ENCODE measurements at regions of chr17 and their contacts with region 1.

Region 1: DNA sequence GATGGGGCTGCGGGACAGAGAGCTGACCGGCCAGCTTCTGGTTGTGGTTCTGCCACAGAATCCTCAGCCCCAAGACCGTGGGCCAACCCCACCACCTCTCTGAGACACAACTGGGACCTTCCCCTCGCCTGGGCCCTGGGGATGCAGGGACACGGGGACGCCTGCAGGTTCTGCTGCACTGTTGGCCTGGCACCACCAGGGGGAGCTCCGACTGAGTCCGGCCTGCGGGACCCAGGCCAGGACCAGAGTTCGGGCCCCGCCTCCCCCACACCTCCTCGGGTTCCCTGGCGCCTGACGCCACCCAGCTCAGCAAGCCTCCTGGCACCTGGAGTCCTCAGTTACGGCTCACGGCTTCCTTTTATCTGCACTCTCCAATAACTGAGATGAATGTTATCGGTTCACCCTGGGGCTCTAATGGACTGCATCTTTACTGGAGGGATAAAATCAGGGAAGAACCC is 27.3 kb downstream of the TBC1D16 start:
- DNase-seq: peak; percentile 81 to 91
- H3K4me3 ChIP-seq: no peak overlapping the region
- H3K4me3 Mint-ChIP-seq: no peak overlapping the region
- H3K27ac Mint-ChIP-seq: no peak overlapping the region
- H3K4me1 ChIP-seq: peaks cover 10% of the 10 kb centered on the region; the same call in 1 of the 2 replicates
- H3K4me1 Mint-ChIP-seq: peaks cover 8% of the 10 kb centered on the region
- H3K27me3 ChIP-seq: no peaks in the 10 kb centered on the region
- H3K27me3 Mint-ChIP-seq: no peaks in the 10 kb centered on the region
- CTCF ChIP-seq: peak; percentile 96 to 97

Region 2: GRCh38 chr17:79902146-79902791 is 106.1 kb before region 1 on chr17:
- CTCF ChIA-PET with region 1: no interaction called
- POLR2A ChIA-PET with region 1: no interaction called
- intact Hi-C with region 1: no loop called
- DNase-seq: peak in 1 of 2 experiments; percentile 44
- H3K4me3 ChIP-seq: no peak overlapping the region
- H3K4me3 Mint-ChIP-seq: no peak overlapping the region
- H3K27ac Mint-ChIP-seq: no peak overlapping the region
- H3K4me1 ChIP-seq: peaks cover 13% of the 10 kb centered on the region; the same call in 1 of the 2 replicates
- H3K4me1 Mint-ChIP-seq: peaks cover 19% of the 10 kb centered on the region
- H3K27me3 ChIP-seq: no peaks in the 10 kb centered on the region
- H3K27me3 Mint-ChIP-seq: no peaks in the 10 kb centered on the region
- CTCF ChIP-seq: no peak

Region 3: GRCh38 chr17:80035943-80036714 is 27.7 kb after region 1 on chr17 and contains the start of gene CCDC40:
- CTCF ChIA-PET with region 1: interaction called, 7 read pairs
- POLR2A ChIA-PET with region 1: no interaction called
- intact Hi-C with region 1: loop called (anchors 1 kb)
- DNase-seq: peak; percentile 84 to 91
- H3K4me3 ChIP-seq: peak within 1 kb of the TSS; percentile 63
- H3K4me3 Mint-ChIP-seq: peak within 1 kb of the TSS; percentile 88
- H3K27ac Mint-ChIP-seq: peak within 1 kb of the TSS; percentile 99
- H3K4me1 ChIP-seq: peaks cover 4% of the 10 kb centered on the region; the same call in 1 of the 2 replicates
- H3K4me1 Mint-ChIP-seq: peaks cover 9% of the 10 kb centered on the region
- H3K27me3 ChIP-seq: no peaks in the 10 kb centered on the region
- H3K27me3 Mint-ChIP-seq: no peaks in the 10 kb centered on the region
- CTCF ChIP-seq: peak in 1 of 2 experiments; percentile 14
- total RNA-seq, gene CCDC40: 3.7 and 3.9 TPM in 2 replicates

Region 4: GRCh38 chr17:80082403-80083135 is 74.2 kb after region 1 on chr17:
- CTCF ChIA-PET with region 1: interaction called, 5 read pairs
- POLR2A ChIA-PET with region 1: no interaction called
- intact Hi-C with region 1: loop called (anchors 5 kb)
- DNase-seq: peak; percentile 74 to 82
- H3K4me3 ChIP-seq: no peak overlapping the region
- H3K4me3 Mint-ChIP-seq: no peak overlapping the region
- H3K27ac Mint-ChIP-seq: no peak overlapping the region
- H3K4me1 ChIP-seq: no peaks in the 10 kb centered on the region
- H3K4me1 Mint-ChIP-seq: peaks cover 9% of the 10 kb centered on the region
- H3K27me3 ChIP-seq: no peaks in the 10 kb centered on the region
- H3K27me3 Mint-ChIP-seq: peaks cover 3% of the 10 kb centered on the region
- CTCF ChIP-seq: peak; percentile 80 to 89

Region 5: GRCh38 chr17:80101011-80101945 is 92.9 kb after region 1 on chr17 and contains the start of gene GAA:
- CTCF ChIA-PET with region 1: interaction called, 11 read pairs
- POLR2A ChIA-PET with region 1: no interaction called
- intact Hi-C with region 1: no loop called
- DNase-seq: peak; percentile 80 to 95
- H3K4me3 ChIP-seq: peak within 1 kb of the TSS; percentile 97
- H3K4me3 Mint-ChIP-seq: peak within 1 kb of the TSS; percentile 86
- H3K27ac Mint-ChIP-seq: peak within 1 kb of the TSS; percentile 81
- H3K4me1 ChIP-seq: peaks cover 9% of the 10 kb centered on the region
- H3K4me1 Mint-ChIP-seq: peaks cover 6% of the 10 kb centered on the region
- H3K27me3 ChIP-seq: no peaks in the 10 kb centered on the region; the same call in 1 of the 2 replicates
- H3K27me3 Mint-ChIP-seq: no peaks in the 10 kb centered on the region
- CTCF ChIP-seq: peak; percentile 64 to 94
- total RNA-seq, gene GAA: 42.4 and 44.6 TPM in 2 replicates

Region 6: DNA sequence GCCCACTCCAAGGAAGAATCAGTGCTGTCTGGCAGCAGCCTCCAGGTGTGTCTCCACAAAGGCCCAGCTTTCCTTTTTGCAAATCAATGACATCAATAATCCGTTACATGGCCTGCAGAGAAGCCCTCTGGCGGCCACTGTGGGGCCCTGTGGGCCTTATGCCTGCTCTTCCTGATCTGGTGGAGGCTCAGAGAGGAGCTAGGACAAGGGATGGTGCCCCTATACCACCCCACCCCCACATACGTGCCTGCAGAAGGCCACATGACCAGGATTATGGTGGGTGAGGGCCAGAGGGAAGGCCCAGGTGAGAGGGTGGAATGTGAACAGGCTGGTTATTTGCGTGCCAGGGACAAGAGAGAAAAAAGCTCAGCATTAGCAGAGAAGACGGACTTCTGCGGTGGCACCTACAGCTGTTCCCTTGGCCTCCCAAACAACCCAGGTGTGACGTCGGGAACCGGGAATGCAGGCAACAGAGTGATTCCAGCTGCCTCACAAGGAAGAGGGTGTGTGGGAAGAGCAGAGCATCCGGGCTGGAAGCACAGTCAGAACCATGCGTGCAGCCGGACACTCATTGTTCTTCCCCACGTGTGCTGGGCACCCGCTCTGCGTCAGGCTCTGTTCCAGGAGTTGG is 116.1 kb after region 1 on chr17:
- CTCF ChIA-PET with region 1: interaction called, 4 read pairs
- POLR2A ChIA-PET with region 1: no interaction called
- intact Hi-C with region 1: loop called (anchors 5 kb)
- DNase-seq: peak; percentile 62 to 74
- H3K4me3 ChIP-seq: no peak overlapping the region
- H3K4me3 Mint-ChIP-seq: no peak overlapping the region
- H3K27ac Mint-ChIP-seq: no peak overlapping the region
- H3K4me1 ChIP-seq: 0 out of 2 replicates have a peak, but pooled peaks cover 4% of the 10 kb centered on the region
- H3K4me1 Mint-ChIP-seq: peaks cover 7% of the 10 kb centered on the region
- H3K27me3 ChIP-seq: no peaks in the 10 kb centered on the region
- H3K27me3 Mint-ChIP-seq: no peaks in the 10 kb centered on the region
- CTCF ChIP-seq: peak; percentile 59 to 88